ENCODE measurements at regions of chr1 and their contacts with region 1.

Region 1: GRCh38 chr1:20212685-20213331 is 26.5 kb upstream of the PLA2G2C start:
- DNase-seq: peak; percentile 18
- H3K4me3 ChIP-seq: no peak overlapping the region
- H3K27ac ChIP-seq: no peak overlapping the region
- H3K27me3 ChIP-seq: peaks cover 23% of the 10 kb centered on the region
- CTCF ChIP-seq: peak; percentile 86

Region 2: DNA sequence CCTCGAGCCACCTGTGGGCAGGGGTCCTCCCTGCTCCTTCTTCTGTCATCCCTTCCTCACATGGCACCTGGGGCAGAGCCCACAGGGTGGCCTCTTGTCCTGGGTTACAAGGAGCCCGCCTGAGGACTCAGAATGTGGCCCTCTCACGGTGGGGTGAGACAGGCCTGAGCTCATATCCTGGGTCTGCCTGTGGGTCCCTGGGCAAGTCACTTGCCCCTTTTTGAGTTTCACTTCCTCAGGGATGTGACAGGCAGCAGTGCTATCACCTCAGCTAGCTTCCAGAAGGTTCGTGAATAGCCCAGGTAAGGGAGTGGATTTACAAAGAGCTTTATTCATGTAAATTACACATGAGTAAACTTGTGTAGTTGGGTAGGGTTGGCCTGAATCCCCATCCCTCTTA is 514.6 kb before region 1 on chr1:
- CTCF ChIA-PET with region 1: no interaction called
- POLR2A ChIA-PET with region 1: no interaction called
- DNase-seq: no peak
- H3K4me3 ChIP-seq: no peak overlapping the region
- H3K27ac ChIP-seq: no peak overlapping the region
- H3K27me3 ChIP-seq: no peaks in the 10 kb centered on the region
- CTCF ChIP-seq: no peak

Region 3: DNA sequence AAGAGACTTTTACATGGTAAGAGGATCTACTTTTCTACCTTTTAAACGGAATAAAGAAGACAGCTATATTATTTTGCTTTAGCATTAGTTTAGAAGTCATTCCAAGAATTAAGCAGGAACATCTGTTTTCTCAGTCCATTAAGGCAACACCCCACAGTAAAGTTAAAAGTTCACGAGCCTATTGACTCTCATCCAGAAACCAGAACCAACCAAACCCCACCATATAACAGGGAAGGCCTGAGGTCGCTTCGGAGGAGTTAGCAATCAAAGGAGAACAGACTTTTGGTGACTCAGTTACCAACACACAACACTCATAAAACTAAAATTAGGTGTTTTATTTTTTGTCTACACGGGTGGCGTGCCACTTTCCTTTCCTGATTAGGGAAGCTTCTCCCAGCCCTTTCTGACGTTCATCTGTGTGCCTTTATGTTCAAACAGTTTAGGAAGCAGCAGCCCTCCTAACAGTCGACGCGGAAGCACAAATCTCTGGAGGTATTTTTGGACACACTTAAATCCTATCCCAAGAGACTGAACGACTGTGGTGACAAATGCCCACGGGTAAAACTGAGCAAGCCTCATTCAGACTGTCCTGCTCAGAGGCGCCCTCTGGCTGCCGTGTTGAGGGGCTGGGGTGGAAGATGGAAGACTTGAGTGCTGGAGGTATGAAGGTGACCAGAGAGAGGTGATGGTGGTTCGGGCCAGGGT is 17.9 kb before region 1 on chr1:
- CTCF ChIA-PET with region 1: interaction called, 24 read pairs
- POLR2A ChIA-PET with region 1: no interaction called
- DNase-seq: peak; percentile 10
- H3K4me3 ChIP-seq: no peak overlapping the region
- H3K27ac ChIP-seq: no peak overlapping the region
- H3K27me3 ChIP-seq: peaks cover 38% of the 10 kb centered on the region
- CTCF ChIP-seq: peak; percentile 90

Region 4: DNA sequence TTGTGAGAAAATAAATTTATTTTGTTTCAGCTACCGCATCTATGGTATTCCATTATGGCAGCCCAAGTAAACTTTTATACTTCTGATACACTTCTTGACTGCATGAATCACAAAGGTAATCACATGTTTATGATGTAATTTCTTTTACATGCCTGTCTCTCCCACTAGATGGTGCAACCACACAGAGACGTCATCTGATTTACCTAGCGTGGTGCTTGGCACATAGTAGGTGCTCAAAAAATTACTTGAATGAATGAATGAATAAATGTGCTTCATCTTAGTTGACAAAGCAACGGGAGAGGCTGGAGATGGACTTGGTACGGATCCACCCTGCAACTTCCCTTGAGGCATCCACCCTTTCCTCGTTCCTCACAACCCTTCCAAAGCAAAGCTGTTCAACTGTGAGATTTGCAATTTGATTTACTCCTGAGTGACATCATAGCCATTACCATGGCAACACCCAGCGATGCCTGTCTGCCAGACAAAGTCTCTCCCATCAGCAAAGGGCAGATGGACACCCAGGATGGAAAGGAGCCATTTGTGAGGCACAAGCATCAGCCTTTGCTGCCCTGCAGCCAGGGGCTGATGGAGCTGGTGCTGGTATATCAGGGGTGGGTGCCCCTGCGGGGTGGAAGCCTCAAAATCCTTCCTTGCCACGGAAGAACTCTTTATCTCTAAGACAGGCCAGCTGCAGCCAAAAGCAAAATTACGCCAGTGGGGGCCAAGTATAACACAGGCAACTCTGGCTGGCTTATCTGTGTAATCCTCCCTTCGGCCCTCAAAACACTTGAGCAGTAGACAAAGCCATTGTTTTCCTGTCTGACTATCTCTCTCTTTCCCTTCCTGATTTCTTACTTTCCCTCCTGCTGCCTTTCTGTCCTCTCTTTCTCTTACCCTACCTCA is 58.9 kb after region 1 on chr1:
- CTCF ChIA-PET with region 1: interaction called, 10 read pairs
- POLR2A ChIA-PET with region 1: no interaction called
- DNase-seq: no peak
- H3K4me3 ChIP-seq: no peak overlapping the region
- H3K27ac ChIP-seq: no peak overlapping the region
- H3K27me3 ChIP-seq: peaks cover 4% of the 10 kb centered on the region
- CTCF ChIP-seq: no peak

Region 5: GRCh38 chr1:20376880-20377494 is 164.2 kb after region 1 on chr1:
- CTCF ChIA-PET with region 1: interaction called, 20 read pairs
- POLR2A ChIA-PET with region 1: no interaction called
- DNase-seq: no peak
- H3K4me3 ChIP-seq: no peak overlapping the region
- H3K27ac ChIP-seq: no peak overlapping the region
- H3K27me3 ChIP-seq: peaks cover 17% of the 10 kb centered on the region
- CTCF ChIP-seq: peak; percentile 88

Region 6: GRCh38 chr1:20454004-20454403 is 241.2 kb after region 1 on chr1:
- CTCF ChIA-PET with region 1: interaction called, 14 read pairs
- POLR2A ChIA-PET with region 1: no interaction called
- DNase-seq: no peak
- H3K4me3 ChIP-seq: no peak overlapping the region
- H3K27ac ChIP-seq: no peak overlapping the region
- H3K27me3 ChIP-seq: peaks cover 31% of the 10 kb centered on the region
- CTCF ChIP-seq: no peak